Activated T-helper 1 cell treated with anti-CD3 and anti-CD28 coated beads, Interleukin-12 subunit alpha, Interleukin-12 subunit beta, Interleukin-2, Interleukin-4 antibody, amounts not matched to agents 30 ng/mL and 10 ng/mL and 1 ng/mL, durations not matched to agents 14 hours and 24 hours and 36 hours (primary cell): ENCODE measurements at regions of chr2 and their contacts with region 1.

Region 1: DNA sequence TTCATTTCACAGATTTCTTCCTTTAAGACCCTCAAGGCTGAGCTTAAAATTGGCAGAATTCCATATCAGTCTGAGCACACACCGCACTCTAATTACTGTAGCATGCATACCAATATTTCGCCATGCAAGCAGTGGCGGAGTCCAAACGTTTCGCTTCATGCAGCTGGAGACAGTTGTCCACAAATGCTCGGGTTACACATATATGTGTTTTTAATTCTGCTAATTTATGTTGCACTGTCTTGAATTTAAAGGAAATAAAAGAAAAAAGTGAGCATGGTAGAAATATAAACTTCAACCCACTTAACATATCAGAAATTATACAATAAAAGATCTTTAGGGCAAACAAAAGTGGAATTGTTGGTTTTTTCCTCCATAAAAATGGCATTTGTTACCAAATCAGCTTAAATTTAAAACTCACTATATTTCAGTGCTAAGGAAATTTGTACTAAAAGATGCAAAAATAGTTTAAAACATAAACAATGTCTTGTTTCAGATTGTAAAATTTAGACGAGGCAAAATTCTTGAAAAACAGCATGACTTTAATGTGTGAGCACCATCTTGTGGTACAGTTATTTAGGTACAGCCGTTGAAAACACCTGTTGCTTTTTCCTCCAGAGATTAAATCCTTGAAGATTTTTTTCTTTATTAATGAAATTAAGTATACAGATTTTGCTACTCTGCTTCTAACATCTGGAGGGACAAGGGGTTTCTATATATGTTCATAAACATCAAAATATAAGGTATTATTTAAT is 24.1 kb upstream of the KANSL1L start:
- DNase-seq: no peak
- H3K4me3 Mint-ChIP-seq: no peak overlapping the region
- H3K27ac Mint-ChIP-seq: no peak overlapping the region
- H3K4me1 Mint-ChIP-seq: peaks cover 6% of the 10 kb centered on the region
- H3K27me3 Mint-ChIP-seq: peaks cover 14% of the 10 kb centered on the region

Region 2: DNA sequence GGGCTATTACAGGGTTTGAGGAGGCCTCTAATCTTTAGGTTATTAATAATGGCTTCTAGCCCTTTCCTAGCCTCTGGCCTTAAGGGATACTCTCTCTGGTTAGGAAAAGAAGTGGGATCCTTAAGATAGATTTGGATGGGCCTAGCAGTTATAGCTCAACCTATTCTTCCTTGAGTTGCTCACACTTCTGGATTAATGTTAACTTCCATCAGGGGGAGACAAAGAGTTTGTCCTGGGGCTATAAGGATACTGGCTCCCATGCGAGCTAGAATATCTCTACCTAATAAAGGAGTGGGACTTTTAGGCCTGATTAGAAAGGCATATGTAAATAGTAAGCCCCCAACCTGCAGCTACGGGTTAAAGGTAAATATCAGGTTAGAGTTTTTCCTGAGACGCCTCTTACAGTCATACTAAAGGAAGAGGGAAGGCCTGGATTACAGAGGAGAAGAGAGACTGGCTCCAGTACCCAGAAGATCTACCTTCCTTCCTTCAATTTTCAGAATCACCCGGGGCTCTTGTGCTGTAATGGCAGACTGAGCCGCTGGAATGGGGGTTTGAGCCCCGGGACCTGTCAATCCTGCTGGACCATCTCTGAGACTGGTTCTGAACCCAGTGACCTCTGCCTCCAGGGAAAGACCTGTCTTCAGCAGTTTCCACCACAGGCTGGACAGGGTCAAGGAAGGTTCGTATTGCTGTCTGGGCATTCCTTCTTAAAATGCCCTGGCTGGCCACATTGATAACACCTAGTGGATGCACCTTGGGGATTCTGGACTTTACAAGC is 1802.8 kb before region 1 on chr2:
- intact Hi-C with region 1: loop called (anchors 2 kb)
- DNase-seq: no peak
- H3K4me3 Mint-ChIP-seq: no peak overlapping the region
- H3K27ac Mint-ChIP-seq: no peak overlapping the region
- H3K4me1 Mint-ChIP-seq: peaks cover 5% of the 10 kb centered on the region
- H3K27me3 Mint-ChIP-seq: peaks cover 10% of the 10 kb centered on the region

Region 3: DNA sequence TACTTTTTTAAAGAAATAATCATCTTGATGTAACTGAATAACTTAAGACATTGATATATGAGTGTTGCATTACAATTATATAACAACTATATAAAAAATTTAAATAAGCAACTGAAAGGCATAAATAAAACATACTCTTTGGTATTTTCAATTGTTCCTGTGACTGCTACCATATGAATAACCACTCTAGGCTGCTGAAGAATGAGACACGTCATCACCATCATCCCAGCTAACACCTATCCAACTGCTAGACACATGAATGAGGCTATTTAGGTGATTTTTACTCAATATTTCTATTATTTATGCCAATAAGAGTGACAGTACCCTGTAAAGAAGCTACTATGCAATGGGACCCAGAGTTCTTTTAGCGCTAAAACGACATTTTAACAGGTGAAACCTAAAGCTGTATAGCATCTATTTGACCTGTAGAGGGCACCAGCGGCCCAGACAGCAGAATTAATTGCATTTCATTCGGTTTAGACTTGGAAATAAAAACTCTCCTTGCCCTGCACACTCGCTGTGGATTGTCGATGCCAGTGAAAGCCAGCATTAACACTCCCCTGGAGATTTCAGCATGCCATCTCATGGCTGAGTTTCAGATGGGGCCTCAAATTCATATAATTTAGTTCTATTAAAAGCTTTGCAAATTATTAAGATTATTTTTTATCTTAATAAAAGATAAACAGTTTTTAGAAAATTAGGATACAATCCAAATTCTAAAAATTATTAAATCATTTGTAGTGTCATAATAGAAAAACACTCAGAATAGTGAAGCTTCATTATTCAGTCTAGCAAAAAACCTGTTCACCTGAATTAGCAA is 860.9 kb before region 1 on chr2:
- intact Hi-C with region 1: loop called (anchors 1 kb)
- DNase-seq: peak; percentile 1
- H3K4me3 Mint-ChIP-seq: no peak overlapping the region
- H3K27ac Mint-ChIP-seq: no peak overlapping the region
- H3K4me1 Mint-ChIP-seq: no peaks in the 10 kb centered on the region
- H3K27me3 Mint-ChIP-seq: peaks cover 2% of the 10 kb centered on the region

Region 4: DNA sequence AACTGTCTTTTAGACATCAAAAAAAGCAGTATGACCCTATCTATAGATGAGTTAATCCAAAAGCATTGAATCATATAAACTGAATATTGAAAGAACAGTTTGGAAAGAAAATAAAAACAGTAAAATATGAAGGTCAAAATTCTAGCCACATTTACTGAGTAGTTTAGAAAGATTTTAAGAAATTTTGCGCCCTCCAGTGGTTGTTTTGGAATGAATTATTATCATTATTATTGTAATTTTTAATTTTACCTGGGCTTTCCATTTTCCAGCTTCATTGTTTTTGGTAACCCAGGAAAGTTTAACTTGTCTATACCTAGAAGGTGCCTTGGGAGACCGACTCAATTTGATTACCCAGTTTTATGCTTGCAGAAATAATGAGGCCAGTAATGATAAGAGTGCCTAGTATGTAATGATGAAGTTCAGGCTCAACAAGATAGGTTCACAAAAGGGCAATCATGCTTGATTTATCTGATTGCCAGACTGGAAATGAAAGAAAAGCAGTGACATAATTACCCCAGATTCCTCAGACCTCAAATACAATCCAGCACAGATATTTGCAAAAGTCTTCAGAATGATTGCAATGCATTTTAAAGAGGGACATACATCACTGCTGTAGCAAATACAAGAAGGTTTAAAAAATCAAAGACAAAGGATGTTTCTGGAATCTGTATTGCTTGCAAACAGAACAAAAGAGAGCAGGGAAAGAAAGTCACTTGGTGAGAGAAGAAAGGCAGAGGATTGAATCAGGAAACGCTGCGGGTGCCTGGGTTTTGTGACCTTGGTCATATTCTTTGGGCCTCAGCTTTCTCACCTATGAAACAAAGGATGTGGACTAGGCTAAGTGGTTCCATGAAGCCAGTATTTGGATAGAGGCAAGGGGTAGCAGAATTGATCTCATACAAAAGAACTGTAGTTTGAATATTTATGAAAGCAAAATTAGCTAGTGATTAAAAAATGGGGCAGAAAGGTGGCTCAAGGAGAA is 617.6 kb before region 1 on chr2:
- intact Hi-C with region 1: loop called (anchors 2 kb)
- DNase-seq: no peak
- H3K4me3 Mint-ChIP-seq: no peak overlapping the region
- H3K27ac Mint-ChIP-seq: no peak overlapping the region
- H3K4me1 Mint-ChIP-seq: no peaks in the 10 kb centered on the region
- H3K27me3 Mint-ChIP-seq: peaks cover 5% of the 10 kb centered on the region

Region 5: DNA sequence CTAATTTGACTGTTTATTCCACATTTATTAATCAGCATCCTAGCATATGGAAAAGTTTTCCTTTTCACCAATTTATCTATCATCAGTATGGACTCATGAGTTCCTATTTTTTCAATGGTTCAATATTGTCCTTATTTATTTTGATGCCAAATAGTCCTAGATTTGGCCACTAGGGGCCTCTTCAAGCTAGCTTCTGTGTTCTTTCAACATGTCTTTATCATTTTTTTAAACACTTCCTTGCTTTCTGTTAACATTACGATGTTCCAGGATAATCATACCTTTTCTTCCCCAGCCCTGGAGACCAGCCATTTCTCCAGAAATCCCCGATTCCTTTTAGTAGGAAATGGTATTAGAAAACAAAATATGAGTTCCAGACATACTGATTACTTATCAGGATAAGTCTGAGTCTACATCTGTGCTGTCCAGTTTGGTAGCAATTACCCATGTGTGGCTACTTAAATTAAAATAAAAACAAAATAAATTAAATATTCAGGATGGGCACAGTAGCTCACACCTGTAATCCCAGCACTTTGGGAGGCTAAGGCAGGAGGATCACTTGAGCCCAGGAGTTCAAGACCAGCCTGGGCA is 122.3 kb before region 1 on chr2:
- intact Hi-C with region 1: loop called (anchors 1 kb)
- DNase-seq: no peak
- H3K4me3 Mint-ChIP-seq: no peak overlapping the region
- H3K27ac Mint-ChIP-seq: no peak overlapping the region
- H3K4me1 Mint-ChIP-seq: no peaks in the 10 kb centered on the region
- H3K27me3 Mint-ChIP-seq: peaks cover 2% of the 10 kb centered on the region